ENCODE measurements at regions of chr12 and their contacts with region 1.

Region 1: DNA sequence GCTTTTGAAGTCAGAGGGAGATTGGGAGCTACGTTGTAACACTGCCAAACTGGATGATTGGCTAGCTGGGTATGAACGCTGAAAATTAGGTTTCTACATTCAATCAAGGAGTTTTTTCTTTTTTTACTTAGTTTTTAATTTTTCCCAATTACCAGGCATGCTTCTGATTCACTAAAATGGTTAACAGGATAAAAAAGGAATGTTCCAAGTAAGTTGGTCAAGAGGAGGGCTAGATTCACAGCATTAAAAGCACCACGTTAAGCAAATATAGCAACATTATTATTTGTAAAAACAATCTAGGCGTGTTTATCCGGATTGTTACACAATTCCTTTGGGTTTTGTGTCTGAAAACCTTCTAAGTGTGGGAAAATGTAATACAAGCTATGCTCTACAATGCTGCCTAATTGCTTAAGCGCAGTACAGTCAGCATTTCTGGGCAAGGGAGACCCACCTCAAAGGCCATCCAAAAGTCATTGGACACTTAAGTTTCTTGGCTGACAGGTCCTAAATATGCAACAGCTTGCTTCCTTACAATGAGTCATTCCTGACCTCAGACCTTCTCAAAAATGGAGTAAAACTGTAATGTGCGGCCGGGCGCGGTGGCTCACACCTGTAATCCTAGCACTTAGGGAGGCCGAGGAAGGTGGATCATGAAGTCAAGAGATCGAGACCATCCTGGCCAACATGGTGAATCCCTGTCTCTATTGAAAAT is 1.2 kb downstream of the RPLP0 start:
- DNase-seq: no peak
- ATAC-seq: no peak
- H3K4me3 Mint-ChIP-seq: peak overlapping the region; percentile 97
- H3K27ac Mint-ChIP-seq: peak overlapping the region; percentile 99
- H3K4me1 Mint-ChIP-seq: peaks cover 27% of the 10 kb centered on the region
- H3K27me3 Mint-ChIP-seq: no peaks in the 10 kb centered on the region
- CTCF ChIP-seq: no peak

Region 2: GRCh38 chr12:120116792-120117651 is 82.7 kb before region 1 on chr12:
- CTCF ChIA-PET with region 1: interaction called, 13 read pairs
- POLR2A ChIA-PET with region 1: interaction called, 23 read pairs
- DNase-seq: peak; percentile 98
- ATAC-seq: peak; percentile 83
- H3K4me3 Mint-ChIP-seq: peak overlapping the region; percentile 82
- H3K27ac Mint-ChIP-seq: peak overlapping the region; percentile 89
- H3K4me1 Mint-ChIP-seq: peaks cover 31% of the 10 kb centered on the region
- H3K27me3 Mint-ChIP-seq: no peaks in the 10 kb centered on the region; the same call in 1 of the 2 replicates
- CTCF ChIP-seq: no peak

Region 3: DNA sequence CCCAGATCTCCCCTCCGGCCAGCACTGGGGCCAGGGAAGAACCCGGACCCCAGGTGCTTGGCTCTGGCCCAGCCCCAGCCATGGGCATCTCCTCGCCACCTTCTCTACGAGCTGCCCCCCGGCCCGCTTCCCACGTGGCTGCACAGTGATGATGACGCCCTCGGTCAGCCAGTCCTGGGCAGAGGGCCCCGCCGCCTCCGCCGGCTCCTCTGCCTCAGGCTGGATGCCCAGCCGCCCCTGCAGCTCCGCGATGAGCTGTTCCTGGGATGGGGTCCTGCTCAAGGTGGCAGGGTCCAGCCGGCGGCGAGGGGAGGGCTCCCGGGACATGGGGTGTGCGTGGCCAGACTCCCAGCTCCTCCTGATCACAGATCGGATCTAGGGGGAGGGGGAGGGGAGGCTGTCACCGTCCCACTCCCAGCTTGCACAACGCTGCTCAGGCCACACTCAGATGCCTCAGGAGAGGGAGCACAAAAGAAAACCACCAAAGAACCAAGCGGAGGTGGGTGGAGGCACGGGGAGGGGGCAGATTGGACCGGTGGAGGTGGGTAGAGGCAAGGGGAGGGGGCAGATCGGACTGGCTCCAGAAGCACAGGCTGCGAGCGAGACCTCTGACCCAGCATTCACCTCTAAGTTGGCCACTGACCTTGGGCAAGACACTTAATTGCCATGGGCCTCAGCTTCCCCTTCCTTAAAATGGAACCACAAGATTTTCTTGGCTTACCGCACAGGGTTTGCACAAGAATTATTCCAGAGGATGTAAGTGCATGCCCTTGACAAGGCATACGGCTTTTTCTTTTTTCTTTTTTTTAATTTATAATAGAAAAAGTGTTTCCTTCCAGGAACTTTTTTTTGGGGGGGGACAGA is 17.2 kb after region 1 on chr12:
- CTCF ChIA-PET with region 1: interaction called, 15 read pairs
- POLR2A ChIA-PET with region 1: interaction called, 8 read pairs
- DNase-seq: no peak
- ATAC-seq: peak; percentile 7
- H3K4me3 Mint-ChIP-seq: no peak overlapping the region
- H3K27ac Mint-ChIP-seq: no peak overlapping the region
- H3K4me1 Mint-ChIP-seq: peaks cover 8% of the 10 kb centered on the region
- H3K27me3 Mint-ChIP-seq: no peaks in the 10 kb centered on the region
- CTCF ChIP-seq: no peak

Region 4: DNA sequence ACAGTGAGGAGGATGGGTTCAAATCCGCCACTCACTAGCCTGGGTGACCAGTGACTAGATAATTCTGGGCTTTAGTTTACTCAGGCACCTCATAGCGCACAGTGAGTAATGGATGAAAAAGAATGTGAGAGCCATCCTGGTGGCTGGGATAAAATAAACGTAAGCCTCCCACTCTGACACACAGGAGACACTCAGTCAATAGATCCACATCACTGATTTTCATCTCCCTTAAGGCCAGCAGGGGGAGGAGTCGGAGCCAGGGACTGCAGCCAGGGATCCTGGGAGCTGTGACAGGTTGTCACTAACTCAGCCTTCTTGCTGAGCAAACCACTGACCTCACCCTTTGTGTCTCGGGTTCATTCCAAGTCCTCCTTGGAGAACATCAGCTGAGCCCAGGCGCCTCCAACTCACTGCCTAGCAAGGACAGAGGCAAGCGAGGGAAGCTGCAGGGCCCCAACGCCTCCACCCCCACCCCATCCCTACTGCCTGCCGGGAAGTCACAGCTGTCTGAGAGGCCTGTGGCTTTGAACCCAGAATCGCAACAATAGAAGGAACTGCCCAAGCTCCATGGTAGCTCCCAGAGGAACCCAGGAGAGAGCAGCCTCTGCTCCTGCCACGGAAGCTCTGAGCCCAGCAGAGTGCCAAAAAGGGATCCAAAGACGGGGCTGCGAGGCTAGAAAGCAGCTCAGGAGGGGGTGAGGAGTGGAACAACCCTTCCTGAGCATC is 35.1 kb after region 1 on chr12:
- CTCF ChIA-PET with region 1: interaction called, 22 read pairs
- POLR2A ChIA-PET with region 1: interaction called, 97 read pairs
- DNase-seq: peak; percentile 36
- ATAC-seq: peak; percentile 2
- H3K4me3 Mint-ChIP-seq: no peak overlapping the region
- H3K27ac Mint-ChIP-seq: peak overlapping the region; percentile 80
- H3K4me1 Mint-ChIP-seq: peaks cover 73% of the 10 kb centered on the region
- H3K27me3 Mint-ChIP-seq: no peaks in the 10 kb centered on the region
- CTCF ChIP-seq: no peak

Region 5: DNA sequence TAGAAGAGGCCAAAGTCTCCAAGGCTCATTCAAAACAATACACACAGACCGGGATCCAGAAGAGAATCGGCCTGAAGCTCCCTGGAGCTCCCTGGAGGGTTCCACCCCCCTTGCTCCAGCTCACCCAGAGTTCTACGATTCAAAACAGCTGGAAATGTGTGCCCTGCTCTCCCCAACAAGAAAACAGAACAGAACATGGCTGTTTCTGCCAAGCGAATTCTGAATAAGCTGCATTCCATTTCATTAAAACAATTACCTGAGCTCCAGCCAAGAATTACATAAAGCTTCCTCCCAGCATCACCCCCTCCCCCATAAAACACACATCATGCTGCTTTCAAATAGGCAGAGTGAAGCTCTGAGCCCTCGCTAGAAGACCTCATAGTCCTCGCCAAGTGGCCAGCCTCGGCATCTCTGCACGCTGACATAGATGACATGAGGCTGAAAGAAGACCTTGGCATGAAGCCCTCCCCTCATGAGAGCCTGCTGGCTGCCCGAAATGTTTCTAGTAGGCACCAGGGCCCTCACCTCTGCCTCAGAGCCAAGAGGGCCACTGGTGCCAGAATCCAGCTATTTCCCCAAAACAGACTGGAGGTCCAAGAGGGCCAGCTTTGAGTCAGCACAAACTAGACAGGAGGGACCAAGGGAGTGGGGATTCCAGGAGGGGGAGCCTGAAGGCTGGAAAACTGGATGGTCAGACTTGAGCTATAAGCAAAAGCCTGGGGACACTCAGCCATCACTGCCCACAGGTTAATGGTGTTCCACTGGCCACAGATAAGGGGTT is 57.5 kb after region 1 on chr12:
- CTCF ChIA-PET with region 1: interaction called, 12 read pairs
- POLR2A ChIA-PET with region 1: interaction called, 12 read pairs
- DNase-seq: no peak
- ATAC-seq: peak; percentile 67
- H3K4me3 Mint-ChIP-seq: no peak overlapping the region
- H3K27ac Mint-ChIP-seq: peak overlapping the region; percentile 90
- H3K4me1 Mint-ChIP-seq: peaks cover 55% of the 10 kb centered on the region
- H3K27me3 Mint-ChIP-seq: no peaks in the 10 kb centered on the region
- CTCF ChIP-seq: no peak

Region 6: GRCh38 chr12:120292661-120293531 is 93.1 kb after region 1 on chr12 and contains the start of gene RNU4-1:
- CTCF ChIA-PET with region 1: interaction called, 17 read pairs
- POLR2A ChIA-PET with region 1: interaction called, 41 read pairs
- DNase-seq: peak; percentile 62
- ATAC-seq: peak; percentile 58
- H3K4me3 Mint-ChIP-seq: no peak within 1 kb of the TSS
- H3K27ac Mint-ChIP-seq: no peak within 1 kb of the TSS
- H3K4me1 Mint-ChIP-seq: peaks cover 9% of the 10 kb centered on the region
- H3K27me3 Mint-ChIP-seq: no peaks in the 10 kb centered on the region; the same call in 1 of the 2 replicates
- CTCF ChIP-seq: no peak
- total RNA-seq, gene RNU4-1: 2,196 to 2,477 TPM (median 2,436 TPM) in 3 replicates

Region 7: DNA sequence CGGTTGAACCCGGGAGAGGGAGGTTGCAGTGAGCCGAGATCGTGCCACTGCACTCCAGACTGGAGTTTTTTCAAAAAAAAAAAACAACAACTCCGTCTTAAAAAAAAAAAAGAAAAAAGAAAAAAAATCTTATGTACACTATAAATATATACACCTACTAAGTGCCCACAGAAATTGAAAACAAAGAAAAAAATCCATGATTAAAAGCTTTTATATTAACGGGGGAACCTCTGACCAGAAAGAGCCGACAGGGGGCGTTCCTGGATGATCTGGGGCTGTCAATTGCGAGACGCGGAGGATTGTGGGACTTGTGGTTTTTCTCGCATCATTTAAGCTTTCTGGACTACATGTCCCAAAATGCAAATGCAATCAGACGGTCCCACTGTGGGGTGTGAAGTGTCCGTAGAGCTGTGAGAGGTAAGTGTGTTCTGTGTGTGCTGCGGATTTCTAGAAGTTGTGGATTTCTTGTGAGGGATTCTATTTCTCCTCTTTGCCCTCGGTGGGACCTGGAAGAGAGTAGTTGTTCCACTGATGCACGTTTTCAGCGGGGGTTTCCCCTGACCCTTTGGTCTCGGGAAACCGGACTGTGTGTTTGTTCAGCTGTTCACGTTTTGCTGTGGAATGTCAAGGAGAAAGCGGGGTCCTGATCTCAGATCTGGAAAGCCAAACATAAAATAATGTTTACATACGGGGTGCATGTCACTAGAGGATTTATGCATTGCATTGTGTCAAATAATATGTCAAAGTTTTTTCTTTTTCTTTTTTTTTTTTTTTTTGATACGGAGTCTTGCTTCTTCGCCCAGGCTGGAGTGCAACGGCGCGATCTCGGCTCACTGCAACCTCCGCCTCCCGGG is 102.4 kb after region 1 on chr12 and contains the start of gene SIRT4:
- CTCF ChIA-PET with region 1: interaction called, 12 read pairs
- POLR2A ChIA-PET with region 1: interaction called, 5 read pairs
- DNase-seq: peak; percentile 89
- ATAC-seq: peak; percentile 95
- H3K4me3 Mint-ChIP-seq: peak within 1 kb of the TSS; percentile 95
- H3K27ac Mint-ChIP-seq: peak within 1 kb of the TSS; percentile 91
- H3K4me1 Mint-ChIP-seq: peaks cover 6% of the 10 kb centered on the region; the same call in 1 of the 2 replicates
- H3K27me3 Mint-ChIP-seq: peaks cover 3% of the 10 kb centered on the region; the same call in 1 of the 2 replicates
- CTCF ChIP-seq: peak; percentile 52; the same call in 1 of the 2 replicates
- total RNA-seq, gene SIRT4: 2.1 to 4.3 TPM (median 2.8 TPM) in 3 replicates

Region 8: GRCh38 chr12:120346681-120347080 is 146.9 kb after region 1 on chr12:
- CTCF ChIA-PET with region 1: no interaction called
- POLR2A ChIA-PET with region 1: no interaction called
- DNase-seq: no peak
- ATAC-seq: peak; percentile 41
- H3K4me3 Mint-ChIP-seq: no peak overlapping the region
- H3K27ac Mint-ChIP-seq: no peak overlapping the region
- H3K4me1 Mint-ChIP-seq: no peaks in the 10 kb centered on the region
- H3K27me3 Mint-ChIP-seq: no peaks in the 10 kb centered on the region
- CTCF ChIP-seq: no peak